ENCODE measurements at regions of chr9 and their contacts with region 1.

Region 1: GRCh38 chr9:84781458-84781857 is 111.9 kb downstream of the NTRK2 start:
- DNase-seq: no peak
- H3K4me3 Mint-ChIP-seq: no peak overlapping the region
- H3K27ac Mint-ChIP-seq: no peak overlapping the region
- H3K4me1 Mint-ChIP-seq: peaks cover 13% of the 10 kb centered on the region
- H3K27me3 Mint-ChIP-seq: peaks cover 7% of the 10 kb centered on the region

Region 2: DNA sequence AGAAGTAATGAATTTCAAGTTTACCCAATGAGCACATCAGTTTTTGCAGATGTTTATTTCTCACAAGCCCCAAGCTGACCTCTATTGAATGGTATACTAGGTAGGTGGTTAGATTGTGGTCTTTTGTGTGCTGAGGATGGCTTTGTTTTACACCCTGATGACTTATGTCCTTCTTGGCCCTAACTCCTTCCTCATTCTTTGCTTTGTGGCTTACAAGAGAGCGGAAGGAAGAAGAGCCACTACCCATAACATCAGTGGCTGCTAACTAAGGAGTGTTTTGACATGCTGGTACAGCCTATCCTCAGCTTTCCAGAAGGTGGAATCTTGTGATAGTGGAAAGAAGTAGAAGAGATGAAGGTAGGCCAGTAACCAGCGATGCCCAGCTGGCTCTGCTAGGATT is 197.6 kb before region 1 on chr9:
- intact Hi-C with region 1: no loop called
- DNase-seq: no peak
- H3K4me3 Mint-ChIP-seq: no peak overlapping the region
- H3K27ac Mint-ChIP-seq: no peak overlapping the region
- H3K4me1 Mint-ChIP-seq: no peaks in the 10 kb centered on the region
- H3K27me3 Mint-ChIP-seq: peaks cover 8% of the 10 kb centered on the region

Region 3: GRCh38 chr9:84668196-84669012 is 113.1 kb before region 1 on chr9:
- intact Hi-C with region 1: loop called (anchors 1 kb)
- DNase-seq: peak; percentile 21
- H3K4me3 Mint-ChIP-seq: peak overlapping the region; percentile 70
- H3K27ac Mint-ChIP-seq: peak overlapping the region; percentile 38
- H3K4me1 Mint-ChIP-seq: peaks cover 16% of the 10 kb centered on the region
- H3K27me3 Mint-ChIP-seq: peaks cover 56% of the 10 kb centered on the region

Region 4: DNA sequence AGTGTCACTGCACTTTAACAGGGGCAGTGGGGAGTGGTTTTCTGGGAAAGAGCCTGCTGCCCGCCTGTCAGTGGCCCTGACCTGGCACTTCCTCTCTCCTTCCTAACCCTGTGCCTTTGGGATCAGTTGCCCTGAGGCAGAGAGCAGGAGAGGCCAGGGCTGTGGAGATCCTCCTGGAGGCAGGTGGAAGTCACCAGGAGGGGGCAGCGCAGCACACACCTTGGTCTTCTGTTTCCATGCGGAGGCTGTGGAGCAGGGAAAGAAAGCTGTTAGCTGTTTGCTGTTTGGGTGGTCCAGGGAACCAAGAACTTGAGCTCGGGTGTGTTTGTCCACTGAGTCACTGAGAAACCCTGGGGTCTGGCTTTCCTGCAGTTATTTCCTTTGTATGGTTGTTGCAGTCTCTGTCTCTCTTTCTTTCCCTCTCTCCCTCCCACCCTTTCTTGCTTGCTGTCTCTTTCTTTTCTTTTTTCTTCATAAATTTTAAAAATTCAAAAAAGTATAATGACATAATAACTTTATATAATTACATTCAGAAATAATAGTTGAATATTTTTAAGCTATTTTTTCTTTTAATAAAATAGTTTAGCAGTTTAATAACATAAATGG is 83.8 kb before region 1 on chr9:
- intact Hi-C with region 1: loop called (anchors 1 kb)
- DNase-seq: peak; percentile 24
- H3K4me3 Mint-ChIP-seq: no peak overlapping the region
- H3K27ac Mint-ChIP-seq: no peak overlapping the region
- H3K4me1 Mint-ChIP-seq: peaks cover 22% of the 10 kb centered on the region
- H3K27me3 Mint-ChIP-seq: peaks cover 4% of the 10 kb centered on the region

Region 5: GRCh38 chr9:84759300-84759750 is 22.1 kb before region 1 on chr9:
- intact Hi-C with region 1: loop called (anchors 2 kb)
- DNase-seq: peak; percentile 49
- H3K4me3 Mint-ChIP-seq: peak overlapping the region; percentile 59
- H3K27ac Mint-ChIP-seq: peak overlapping the region; percentile 83
- H3K4me1 Mint-ChIP-seq: peaks cover 55% of the 10 kb centered on the region
- H3K27me3 Mint-ChIP-seq: no peaks in the 10 kb centered on the region